ENCODE measurements at regions of chr2 and their contacts with region 1.

Region 1: DNA sequence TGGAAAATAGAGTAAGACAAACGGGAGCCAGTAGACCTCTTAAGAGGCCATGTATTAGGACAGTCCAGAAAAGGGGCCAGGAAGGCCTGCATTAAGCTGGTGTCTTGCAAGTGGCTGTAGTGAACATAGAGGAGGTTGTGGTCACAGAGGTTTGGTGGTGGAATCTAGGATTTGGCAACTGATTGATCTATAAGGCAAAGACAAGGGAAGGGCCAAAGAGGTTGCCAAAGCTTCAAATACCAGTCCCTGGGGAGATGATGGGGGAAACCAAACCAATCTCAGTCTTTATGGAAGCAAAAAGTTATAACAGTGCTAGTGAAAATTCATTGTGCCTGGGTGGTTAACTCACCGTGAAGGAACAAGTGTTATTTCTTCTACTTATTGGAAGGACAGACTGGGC is 28.7 kb upstream of the RTN4 start:
- DNase-seq: no peak
- H3K4me3 Mint-ChIP-seq: no peak overlapping the region
- H3K27ac Mint-ChIP-seq: no peak overlapping the region
- H3K4me1 Mint-ChIP-seq: no peaks in the 10 kb centered on the region
- H3K27me3 Mint-ChIP-seq: no peaks in the 10 kb centered on the region

Region 2: GRCh38 chr2:54194761-54195750 is 883.9 kb before region 1 on chr2:
- CTCF ChIA-PET with region 1: no interaction called
- intact Hi-C with region 1: loop called (anchors 5 kb)
- DNase-seq: no peak
- H3K4me3 Mint-ChIP-seq: no peak overlapping the region
- H3K27ac Mint-ChIP-seq: no peak overlapping the region
- H3K4me1 Mint-ChIP-seq: no peaks in the 10 kb centered on the region
- H3K27me3 Mint-ChIP-seq: no peaks in the 10 kb centered on the region